Activated CD4-positive, alpha-beta T cell treated with anti-CD3 and anti-CD28 coated beads, Interleukin-2, amount 10 ng/mL, durations not matched to agents 24 days and 14 days (primary cell): ENCODE measurements at regions of chr14 and their contacts with region 1.

Region 1: GRCh38 chr14:36941783-36942521 is 230.5 kb downstream of the SLC25A21 start:
- DNase-seq: peak; percentile 83
- H3K4me3 Mint-ChIP-seq: no peak overlapping the region
- H3K27ac Mint-ChIP-seq: no peak overlapping the region
- H3K4me1 Mint-ChIP-seq: no peaks in the 10 kb centered on the region
- H3K27me3 Mint-ChIP-seq: no peaks in the 10 kb centered on the region

Region 2: GRCh38 chr14:35883677-35884293 is 1058.2 kb before region 1 on chr14:
- intact Hi-C with region 1: loop called (anchors 5 kb)
- DNase-seq: peak; percentile 68
- H3K4me3 Mint-ChIP-seq: no peak overlapping the region
- H3K27ac Mint-ChIP-seq: no peak overlapping the region
- H3K4me1 Mint-ChIP-seq: peaks cover under 1% of the 10 kb centered on the region
- H3K27me3 Mint-ChIP-seq: peaks cover 13% of the 10 kb centered on the region

Region 3: DNA sequence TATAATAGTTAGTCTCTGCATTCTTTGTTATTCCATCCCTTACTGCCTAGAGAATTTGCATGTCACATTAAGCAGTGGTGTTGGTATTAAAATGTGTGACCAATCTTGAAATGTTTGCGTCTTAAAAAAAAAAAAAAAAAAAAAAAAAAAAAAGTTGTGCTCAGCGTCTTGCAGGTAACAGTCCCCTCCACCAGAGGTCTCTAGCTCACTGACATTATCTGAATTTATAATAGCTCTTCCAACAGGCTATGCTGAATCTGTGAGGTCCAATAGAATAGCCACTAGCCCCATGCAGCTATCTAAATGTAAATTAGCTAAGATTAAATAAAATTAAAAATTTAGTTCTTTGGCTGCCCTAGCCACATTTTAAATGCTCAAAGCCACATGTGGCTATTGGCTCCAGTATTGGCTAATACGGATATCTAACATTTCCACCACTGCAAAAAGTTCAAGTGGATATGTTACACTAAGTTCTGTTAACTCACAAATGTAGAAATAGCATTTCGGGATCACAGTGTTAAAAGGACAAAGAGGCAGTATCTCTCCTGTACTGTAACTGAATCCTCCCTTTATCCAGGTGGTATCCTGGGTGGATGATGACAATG is 388.2 kb before region 1 on chr14:
- intact Hi-C with region 1: loop called (anchors 5 kb)
- DNase-seq: peak; percentile 56
- H3K4me3 Mint-ChIP-seq: no peak overlapping the region
- H3K27ac Mint-ChIP-seq: no peak overlapping the region
- H3K4me1 Mint-ChIP-seq: no peaks in the 10 kb centered on the region
- H3K27me3 Mint-ChIP-seq: peaks cover 5% of the 10 kb centered on the region

Region 4: DNA sequence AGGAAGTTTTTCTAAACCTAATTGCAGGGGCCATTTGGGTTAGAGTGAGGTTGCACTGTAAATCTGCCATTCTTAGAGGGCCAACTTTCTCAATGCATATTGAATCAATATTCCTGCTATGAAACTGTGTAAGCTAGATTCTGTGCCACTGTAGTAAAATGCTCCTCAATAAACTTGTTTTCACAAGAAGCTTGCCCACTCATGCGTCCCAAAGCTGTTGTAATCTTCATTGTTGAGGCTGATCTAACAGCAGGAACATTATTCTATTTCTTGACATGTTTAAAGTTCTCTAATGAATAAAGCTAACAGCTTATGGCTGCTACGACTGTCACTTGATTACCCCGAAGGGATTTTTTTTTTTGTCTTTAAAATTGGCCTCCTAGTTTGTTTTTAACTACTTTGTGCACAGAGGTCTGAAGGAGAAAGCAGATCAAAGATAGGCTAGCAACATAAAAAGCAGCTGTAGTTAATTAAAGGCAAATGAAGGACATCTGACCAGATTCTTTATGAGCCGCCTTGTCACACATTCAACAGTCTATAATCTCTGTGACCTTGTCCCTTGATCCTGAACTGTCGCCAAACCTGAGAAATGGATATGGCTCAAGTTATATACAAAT is 36.6 kb before region 1 on chr14:
- intact Hi-C with region 1: no loop called
- DNase-seq: no peak
- H3K4me3 Mint-ChIP-seq: no peak overlapping the region
- H3K27ac Mint-ChIP-seq: no peak overlapping the region
- H3K4me1 Mint-ChIP-seq: no peaks in the 10 kb centered on the region
- H3K27me3 Mint-ChIP-seq: no peaks in the 10 kb centered on the region

Region 5: DNA sequence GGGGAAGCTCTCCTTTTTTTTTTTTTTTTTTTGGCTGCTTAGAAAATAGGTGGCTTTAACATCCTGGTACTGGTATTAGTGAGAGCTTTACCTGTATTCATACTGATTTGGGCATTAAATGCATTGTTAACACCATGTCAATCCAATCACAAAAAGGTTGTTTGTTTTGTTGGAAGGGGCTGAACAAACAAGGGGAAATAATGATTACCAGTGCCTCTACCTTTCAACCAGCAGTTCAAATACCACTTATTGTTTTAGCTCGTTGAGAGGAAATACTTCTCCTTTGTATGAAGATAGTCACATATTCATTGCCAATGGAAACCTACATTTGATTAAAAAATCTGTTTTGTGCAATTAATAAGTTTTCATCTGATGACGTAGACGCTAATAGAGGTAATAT is 328.7 kb after region 1 on chr14:
- intact Hi-C with region 1: no loop called
- DNase-seq: no peak
- H3K4me3 Mint-ChIP-seq: no peak overlapping the region
- H3K27ac Mint-ChIP-seq: no peak overlapping the region
- H3K4me1 Mint-ChIP-seq: no peaks in the 10 kb centered on the region
- H3K27me3 Mint-ChIP-seq: no peaks in the 10 kb centered on the region